Breast epithelium (tissue), 4 donors: ENCODE measurements at regions of chr5 and their contacts with region 1.

Region 1: DNA sequence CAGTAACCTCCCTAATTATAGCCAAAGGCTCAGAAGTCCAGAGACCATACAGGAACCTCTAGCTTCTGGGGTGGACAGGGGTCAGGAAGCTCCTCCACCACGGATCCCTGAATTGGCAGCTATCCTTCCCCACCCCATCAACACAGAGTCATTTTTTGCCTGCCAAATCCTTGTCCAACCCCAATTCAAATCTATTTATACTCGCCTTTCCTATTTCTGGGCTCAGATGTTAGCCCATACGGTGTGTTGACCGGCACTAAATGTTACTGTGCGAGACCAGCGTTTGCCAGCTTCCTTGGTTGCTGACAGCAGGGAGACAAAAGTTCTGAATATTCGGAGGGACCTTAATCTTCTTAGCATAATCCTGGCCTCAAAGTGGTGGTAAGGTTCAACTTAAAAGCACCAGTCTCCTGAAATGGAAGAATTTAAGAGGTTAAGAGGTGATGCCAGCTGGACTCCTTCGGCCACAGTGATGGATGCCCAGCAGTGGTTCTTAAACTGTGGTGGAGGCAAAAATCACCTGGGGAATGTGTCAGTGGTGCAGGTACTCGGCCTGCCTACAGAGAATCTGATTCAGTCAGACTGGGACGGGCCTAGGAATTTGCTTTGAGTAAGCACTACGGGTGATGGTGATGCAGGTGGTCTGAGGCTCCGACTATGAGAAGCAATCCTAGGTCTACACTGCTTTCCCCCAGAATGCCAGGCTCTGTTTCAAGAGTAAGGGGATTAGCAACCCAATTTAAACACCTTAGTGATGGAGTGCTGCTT is 204.8 kb upstream of the MEF2C start:
- DNase-seq: no peak
- H3K4me3 ChIP-seq: no peak overlapping the region
- H3K27ac ChIP-seq: no peak overlapping the region
- H3K4me1 ChIP-seq: no peaks in the 10 kb centered on the region
- H3K27me3 ChIP-seq: no peaks in the 10 kb centered on the region
- CTCF ChIP-seq: no peak
- POLR2A ChIP-seq: no peak

Region 2: DNA sequence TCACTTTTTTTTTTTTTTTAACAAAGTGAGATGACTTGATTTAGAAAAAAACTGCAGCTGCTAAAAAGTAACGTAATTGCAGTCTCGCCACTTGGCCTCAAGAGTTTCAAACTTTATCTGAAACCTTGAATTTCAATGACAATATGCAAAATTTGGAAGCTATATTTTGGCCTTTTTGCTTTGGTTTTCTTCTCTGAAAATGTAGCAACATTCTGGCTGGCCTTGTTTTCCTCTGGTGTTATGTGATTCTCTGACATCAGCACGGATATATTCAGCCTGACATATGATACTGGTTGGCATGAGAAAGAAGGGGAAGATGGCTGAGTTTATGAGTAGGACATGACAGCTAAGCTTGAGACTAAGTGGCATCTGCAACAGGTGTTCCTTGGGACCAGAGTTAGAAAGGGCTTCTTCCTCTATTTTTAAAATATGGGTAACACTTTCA is 341.3 kb before region 1 on chr5:
- intact Hi-C with region 1: no loop called
- DNase-seq: no peak
- H3K4me3 ChIP-seq: no peak overlapping the region
- H3K27ac ChIP-seq: no peak overlapping the region
- H3K4me1 ChIP-seq: no peaks in the 10 kb centered on the region
- H3K27me3 ChIP-seq: no peaks in the 10 kb centered on the region
- CTCF ChIP-seq: no peak
- POLR2A ChIP-seq: no peak

Region 3: GRCh38 chr5:89989776-89990175 is 902.0 kb after region 1 on chr5:
- intact Hi-C with region 1: loop called (anchors 5 kb)
- DNase-seq: no peak
- H3K4me3 ChIP-seq: no peak overlapping the region
- H3K27ac ChIP-seq: no peak overlapping the region
- H3K4me1 ChIP-seq: no peaks in the 10 kb centered on the region
- H3K27me3 ChIP-seq: no peaks in the 10 kb centered on the region
- CTCF ChIP-seq: no peak
- POLR2A ChIP-seq: no peak

Region 4: DNA sequence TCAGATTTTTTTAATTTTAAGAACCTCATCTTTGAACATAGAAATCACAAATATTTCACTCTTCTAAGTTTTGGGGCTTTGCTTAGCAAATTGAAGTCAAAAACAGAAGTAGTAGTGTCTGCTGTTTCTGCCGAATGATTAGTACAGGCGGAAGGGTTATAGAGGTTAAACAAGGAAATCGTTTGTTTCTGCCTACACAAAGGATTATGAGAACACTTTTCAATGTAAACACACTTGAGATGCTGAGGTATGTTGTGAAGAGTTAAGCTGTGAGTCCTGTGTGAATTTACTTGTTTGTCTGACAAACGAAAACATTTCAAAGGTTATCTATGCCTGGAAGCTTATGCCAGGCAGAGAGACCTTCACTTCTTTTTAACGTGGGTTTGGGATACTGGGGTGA is 1097.0 kb after region 1 on chr5:
- intact Hi-C with region 1: no loop called
- DNase-seq: no peak
- H3K4me3 ChIP-seq: no peak overlapping the region
- H3K27ac ChIP-seq: no peak overlapping the region
- H3K4me1 ChIP-seq: no peaks in the 10 kb centered on the region
- H3K27me3 ChIP-seq: no peaks in the 10 kb centered on the region
- CTCF ChIP-seq: no peak
- POLR2A ChIP-seq: no peak